Activated naive CD4-positive, alpha-beta T cell treated with anti-CD3 and anti-CD28 coated beads for 36 hours (primary cell): ENCODE measurements at regions of chr15 and their contacts with region 1.

Region 1: DNA sequence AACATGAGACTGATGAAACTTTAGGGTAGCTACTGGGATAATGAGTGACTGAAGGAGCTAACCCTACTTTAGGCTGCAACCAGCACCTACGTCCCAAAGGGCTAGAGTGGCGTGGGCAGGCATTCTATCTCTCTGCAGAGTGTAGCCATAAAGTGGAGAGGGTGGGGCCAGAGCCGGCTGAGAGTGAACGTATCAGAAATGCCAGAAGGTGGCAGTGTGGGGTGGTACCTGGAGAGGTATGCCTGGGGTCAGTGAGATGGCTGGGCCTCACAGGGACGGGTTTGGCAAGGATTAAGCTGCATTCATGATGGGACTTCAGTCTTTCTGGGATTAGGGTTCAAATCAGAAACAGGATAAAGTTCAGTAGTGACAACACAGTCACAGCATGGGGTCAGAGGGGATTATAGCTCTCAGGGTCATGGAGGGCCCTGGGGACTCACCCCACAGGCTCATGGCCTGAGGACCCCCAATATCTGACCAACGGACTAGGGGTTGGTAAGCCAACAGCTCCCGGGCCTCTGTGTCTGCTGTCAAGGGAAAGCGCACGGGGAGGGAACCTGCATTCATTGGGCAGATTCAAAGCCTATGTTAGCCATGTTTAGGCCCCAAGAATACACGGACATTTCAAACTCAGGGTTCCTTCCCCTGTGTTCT is 86.5 kb upstream of the FOXB1 start:
- DNase-seq: peak; percentile 86
- H3K4me3 Mint-ChIP-seq: no peak overlapping the region
- H3K27ac Mint-ChIP-seq: no peak overlapping the region
- H3K4me1 Mint-ChIP-seq: peaks cover 28% of the 10 kb centered on the region
- H3K27me3 Mint-ChIP-seq: peaks cover 3% of the 10 kb centered on the region

Region 2: DNA sequence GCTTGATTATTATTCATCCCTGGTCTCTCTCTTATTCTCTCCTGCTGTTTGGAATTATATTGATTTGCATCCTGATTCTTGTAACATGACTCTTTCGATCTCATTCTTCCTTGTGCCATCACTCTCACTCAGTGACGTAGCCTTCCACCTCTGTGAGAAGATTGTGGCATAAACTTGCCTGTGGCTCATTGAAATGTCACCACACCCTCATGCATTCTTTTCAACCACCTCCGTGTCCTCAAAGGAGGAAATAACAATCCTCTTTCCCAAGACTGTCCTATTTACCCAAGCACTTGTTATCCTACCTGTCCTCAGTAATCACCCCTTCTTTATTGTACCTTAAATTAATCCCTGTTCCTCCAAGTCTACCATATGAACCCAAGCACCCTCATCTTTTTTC is 347.3 kb before region 1 on chr15:
- CTCF ChIA-PET with region 1: no interaction called
- intact Hi-C with region 1: no loop called
- DNase-seq: no peak
- H3K4me3 Mint-ChIP-seq: no peak overlapping the region
- H3K27ac Mint-ChIP-seq: no peak overlapping the region
- H3K4me1 Mint-ChIP-seq: no peaks in the 10 kb centered on the region
- H3K27me3 Mint-ChIP-seq: no peaks in the 10 kb centered on the region

Region 3: GRCh38 chr15:59688841-59689625 is 228.6 kb before region 1 on chr15 and contains the start of gene BNIP2:
- CTCF ChIA-PET with region 1: interaction called, 5 read pairs
- intact Hi-C with region 1: loop called (anchors 1 kb)
- DNase-seq: peak; percentile 99
- H3K4me3 Mint-ChIP-seq: peak within 1 kb of the TSS; percentile 87
- H3K27ac Mint-ChIP-seq: peak within 1 kb of the TSS; percentile 93
- H3K4me1 Mint-ChIP-seq: peaks cover 43% of the 10 kb centered on the region
- H3K27me3 Mint-ChIP-seq: no peaks in the 10 kb centered on the region
- total RNA-seq, gene BNIP2: 44.2 to 44.7 TPM

Region 4: GRCh38 chr15:59797756-59798604 is 119.7 kb before region 1 on chr15:
- CTCF ChIA-PET with region 1: interaction called, 3 read pairs
- intact Hi-C with region 1: loop called (anchors 1 kb)
- DNase-seq: no peak
- H3K4me3 Mint-ChIP-seq: no peak overlapping the region
- H3K27ac Mint-ChIP-seq: peak overlapping the region; percentile 41
- H3K4me1 Mint-ChIP-seq: peaks cover 71% of the 10 kb centered on the region
- H3K27me3 Mint-ChIP-seq: no peaks in the 10 kb centered on the region

Region 5: DNA sequence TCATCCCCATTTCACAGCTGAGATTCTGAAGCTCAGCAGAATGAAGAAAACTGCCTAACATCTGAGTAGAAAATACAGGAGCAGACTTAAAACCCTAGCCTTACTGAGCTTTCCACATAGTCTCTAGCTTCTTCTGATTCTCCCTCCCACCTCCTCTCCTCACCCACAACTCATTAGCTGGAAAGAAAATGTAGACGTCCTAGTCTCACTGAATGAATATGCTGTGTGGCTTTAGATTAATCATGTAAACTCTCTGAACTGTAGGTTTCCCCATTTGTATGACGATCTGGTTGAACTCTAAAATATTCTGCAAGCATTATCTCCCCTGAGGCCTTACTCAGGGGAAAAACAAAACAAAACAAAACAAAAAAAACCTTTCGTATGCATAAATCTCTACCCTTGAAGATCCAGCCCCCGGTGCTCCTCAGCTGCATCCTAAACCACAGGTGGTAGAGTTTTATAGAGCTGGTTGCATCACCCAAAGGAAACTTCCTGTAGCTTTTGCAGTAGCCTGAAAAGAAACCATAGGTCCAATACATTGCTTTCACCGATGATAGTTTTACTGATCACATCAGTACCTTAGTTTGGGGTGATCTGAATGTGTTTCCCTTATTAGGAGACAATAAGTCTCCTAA is 127.1 kb after region 1 on chr15:
- CTCF ChIA-PET with region 1: no interaction called
- intact Hi-C with region 1: loop called (anchors 1 kb)
- DNase-seq: peak; percentile 54
- H3K4me3 Mint-ChIP-seq: peak overlapping the region; percentile 35
- H3K27ac Mint-ChIP-seq: peak overlapping the region; percentile 23
- H3K4me1 Mint-ChIP-seq: peaks cover 21% of the 10 kb centered on the region
- H3K27me3 Mint-ChIP-seq: peaks cover 2% of the 10 kb centered on the region

Region 6: GRCh38 chr15:60093273-60094067 is 175.8 kb after region 1 on chr15:
- CTCF ChIA-PET with region 1: no interaction called
- intact Hi-C with region 1: no loop called
- DNase-seq: no peak
- H3K4me3 Mint-ChIP-seq: no peak overlapping the region
- H3K27ac Mint-ChIP-seq: no peak overlapping the region
- H3K4me1 Mint-ChIP-seq: no peaks in the 10 kb centered on the region
- H3K27me3 Mint-ChIP-seq: no peaks in the 10 kb centered on the region

Region 7: GRCh38 chr15:60255390-60255789 is 337.8 kb after region 1 on chr15:
- CTCF ChIA-PET with region 1: no interaction called
- intact Hi-C with region 1: loop called (anchors 2 kb)
- DNase-seq: peak; percentile 59
- H3K4me3 Mint-ChIP-seq: no peak overlapping the region
- H3K27ac Mint-ChIP-seq: no peak overlapping the region
- H3K4me1 Mint-ChIP-seq: peaks cover 6% of the 10 kb centered on the region
- H3K27me3 Mint-ChIP-seq: peaks cover 26% of the 10 kb centered on the region

Region 8: DNA sequence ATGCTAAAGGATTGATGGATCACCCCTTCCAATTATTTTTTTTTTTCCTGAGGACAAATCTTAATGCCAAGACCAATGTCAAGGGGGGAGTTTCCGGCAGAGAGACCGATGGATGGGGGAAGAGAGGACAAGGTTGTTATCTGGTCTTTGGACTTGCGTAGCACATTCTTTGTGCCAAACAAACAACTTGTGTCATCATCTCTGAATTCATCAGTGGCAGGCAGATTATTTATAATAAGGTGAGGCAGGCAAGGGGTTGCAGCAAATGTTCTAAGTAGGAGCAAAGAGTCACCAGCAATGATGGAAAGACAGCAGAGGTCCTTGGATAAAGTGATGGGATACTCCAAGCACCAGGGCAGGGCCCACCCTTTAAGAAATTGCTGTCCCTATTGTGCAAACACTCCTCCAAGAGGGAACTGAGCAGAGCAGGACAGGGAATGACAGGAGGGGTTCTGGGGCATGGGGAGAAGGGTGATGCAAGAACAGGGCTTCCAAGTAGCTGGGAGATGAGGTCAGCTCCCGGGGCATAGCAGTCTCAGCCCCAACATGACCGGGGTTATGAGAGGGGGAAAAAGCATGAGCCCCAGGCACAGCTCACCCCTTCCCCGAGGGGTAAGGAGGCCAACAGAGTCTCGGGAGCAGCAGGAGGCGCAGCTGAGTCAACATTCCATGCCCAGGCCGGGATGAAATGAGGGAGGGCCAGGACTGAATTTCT is 422.7 kb after region 1 on chr15:
- CTCF ChIA-PET with region 1: no interaction called
- intact Hi-C with region 1: no loop called
- DNase-seq: no peak
- H3K4me3 Mint-ChIP-seq: no peak overlapping the region
- H3K27ac Mint-ChIP-seq: no peak overlapping the region
- H3K4me1 Mint-ChIP-seq: peaks cover 2% of the 10 kb centered on the region
- H3K27me3 Mint-ChIP-seq: no peaks in the 10 kb centered on the region

Region 9: GRCh38 chr15:60548101-60548500 is 630.5 kb after region 1 on chr15:
- CTCF ChIA-PET with region 1: no interaction called
- intact Hi-C with region 1: loop called (anchors 1 kb)
- DNase-seq: peak; percentile 83
- H3K4me3 Mint-ChIP-seq: peak overlapping the region; percentile 39
- H3K27ac Mint-ChIP-seq: peak overlapping the region; percentile 80
- H3K4me1 Mint-ChIP-seq: peaks cover 92% of the 10 kb centered on the region
- H3K27me3 Mint-ChIP-seq: no peaks in the 10 kb centered on the region